ENCODE measurements at regions of chr6 and their contacts with region 1.

Region 1: GRCh38 chr6:150978624-150979023 is 113.1 kb downstream of the MTHFD1L start:
- DNase-seq: no peak
- ATAC-seq: no peak
- H3K4me3 Mint-ChIP-seq: no peak overlapping the region
- H3K27ac Mint-ChIP-seq: no peak overlapping the region
- H3K4me1 Mint-ChIP-seq: peaks cover 21% of the 10 kb centered on the region
- H3K27me3 Mint-ChIP-seq: no peaks in the 10 kb centered on the region
- CTCF ChIP-seq: no peak

Region 2: GRCh38 chr6:151065027-151065815 is 86.6 kb after region 1 on chr6:
- CTCF ChIA-PET with region 1: no interaction called
- POLR2A ChIA-PET with region 1: interaction called, 11 read pairs
- intact Hi-C with region 1: no loop called
- DNase-seq: no peak
- ATAC-seq: no peak
- H3K4me3 Mint-ChIP-seq: no peak overlapping the region
- H3K27ac Mint-ChIP-seq: no peak overlapping the region
- H3K4me1 Mint-ChIP-seq: no peaks in the 10 kb centered on the region
- H3K27me3 Mint-ChIP-seq: no peaks in the 10 kb centered on the region
- CTCF ChIP-seq: no peak